PC-9 (cell line): ENCODE measurements at regions of chr1 and their contacts with region 1.

Region 1: GRCh38 chr1:207828485-207829158 is 76.8 kb downstream of the CD46 start:
- DNase-seq: peak; percentile 56 to 66
- H3K4me3 ChIP-seq: no peak overlapping the region
- H3K27ac ChIP-seq: no peak overlapping the region
- H3K4me1 ChIP-seq: peaks cover 35% of the 10 kb centered on the region
- H3K27me3 ChIP-seq: no peaks in the 10 kb centered on the region
- CTCF ChIP-seq: peak; percentile 79

Region 2: GRCh38 chr1:206941858-206942387 is 886.7 kb before region 1 on chr1:
- CTCF ChIA-PET with region 1: no interaction called
- POLR2A ChIA-PET with region 1: interaction called, 18 read pairs
- intact Hi-C with region 1: no loop called
- DNase-seq: no peak
- H3K4me3 ChIP-seq: no peak overlapping the region
- H3K27ac ChIP-seq: no peak overlapping the region
- H3K4me1 ChIP-seq: no peaks in the 10 kb centered on the region
- H3K27me3 ChIP-seq: no peaks in the 10 kb centered on the region
- CTCF ChIP-seq: no peak

Region 3: DNA sequence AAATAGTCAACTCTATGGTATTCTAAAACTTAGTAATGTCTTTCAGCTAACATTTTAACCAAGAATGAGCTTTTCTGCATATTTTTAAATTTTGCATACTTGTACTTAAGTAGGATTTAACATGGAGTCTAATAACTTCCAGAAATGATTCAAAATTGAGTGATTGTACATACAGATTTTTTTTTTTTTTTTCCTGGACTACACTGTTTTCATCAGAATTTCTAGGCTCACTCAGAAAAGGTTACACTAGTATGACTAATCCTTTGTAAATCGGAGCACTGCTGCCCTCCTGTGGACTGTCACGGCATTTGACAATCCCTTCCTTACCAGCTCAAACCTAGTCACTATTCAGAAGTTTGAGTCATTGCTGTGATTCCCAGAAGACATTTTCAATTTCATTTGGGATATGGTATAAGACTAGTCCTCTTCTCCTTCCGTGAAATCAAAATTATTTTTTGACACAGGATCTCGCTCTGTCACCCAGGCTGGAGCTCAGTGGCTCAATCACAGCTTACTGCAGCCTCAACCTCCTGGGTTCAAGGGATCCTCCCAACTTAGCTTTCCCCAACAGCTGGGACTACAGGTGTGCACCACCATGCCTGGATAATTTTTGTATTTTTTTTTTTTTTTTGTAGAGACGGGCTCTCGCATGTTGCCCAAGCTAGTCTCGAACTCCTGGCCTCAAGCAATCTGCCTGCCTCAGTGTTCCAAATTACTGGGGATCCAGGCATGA is 31.2 kb before region 1 on chr1:
- CTCF ChIA-PET with region 1: no interaction called
- POLR2A ChIA-PET with region 1: no interaction called
- intact Hi-C with region 1: no loop called
- DNase-seq: peak; percentile 76 to 79
- H3K4me3 ChIP-seq: no peak overlapping the region
- H3K27ac ChIP-seq: peak overlapping the region; percentile 32; the same call in 1 of the 2 replicates
- H3K4me1 ChIP-seq: no peaks in the 10 kb centered on the region
- H3K27me3 ChIP-seq: no peaks in the 10 kb centered on the region
- CTCF ChIP-seq: peak; percentile 87

Region 4: GRCh38 chr1:207868774-207869721 is 40.4 kb after region 1 on chr1:
- CTCF ChIA-PET with region 1: interaction called, 14 read pairs
- POLR2A ChIA-PET with region 1: interaction called, 4 read pairs
- intact Hi-C with region 1: loop called (anchors 1 kb)
- DNase-seq: peak in 1 of 2 experiments; percentile 80
- H3K4me3 ChIP-seq: peak overlapping the region; percentile 66; the same call in 1 of the 2 replicates
- H3K27ac ChIP-seq: no peak overlapping the region
- H3K4me1 ChIP-seq: peaks cover 28% of the 10 kb centered on the region
- H3K27me3 ChIP-seq: no peaks in the 10 kb centered on the region
- CTCF ChIP-seq: peak; percentile 56

Region 5: DNA sequence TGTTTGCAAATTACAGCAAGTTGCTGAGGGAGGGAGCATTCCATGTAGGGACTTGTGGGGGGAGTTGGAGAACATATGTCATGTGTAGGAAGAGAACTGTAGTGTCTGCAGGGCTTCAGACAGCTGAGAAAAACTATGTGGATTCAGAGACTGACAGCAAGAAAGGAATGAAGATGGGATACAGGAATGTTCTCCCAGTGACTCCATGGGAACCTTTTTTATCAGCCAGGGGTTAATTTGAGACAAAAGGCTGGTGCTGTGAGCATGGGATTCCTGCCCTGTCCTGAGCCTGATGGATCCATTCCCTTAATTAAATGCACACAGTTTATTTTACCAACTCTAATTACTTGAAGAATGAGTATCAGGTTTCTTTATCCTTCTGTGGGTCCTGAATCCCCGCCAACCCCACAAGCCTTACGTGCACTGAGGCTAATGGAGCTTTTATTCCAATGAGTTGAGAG is 442.1 kb after region 1 on chr1:
- CTCF ChIA-PET with region 1: no interaction called
- POLR2A ChIA-PET with region 1: no interaction called
- intact Hi-C with region 1: no loop called
- DNase-seq: no peak
- H3K4me3 ChIP-seq: no peak overlapping the region
- H3K27ac ChIP-seq: no peak overlapping the region
- H3K4me1 ChIP-seq: no peaks in the 10 kb centered on the region
- H3K27me3 ChIP-seq: peaks cover 100% of the 10 kb centered on the region
- CTCF ChIP-seq: no peak